Activated CD4-positive, alpha-beta T cell treated with anti-CD3 and anti-CD28 coated beads, Interleukin-2, amount 10 ng/mL, durations not matched to agents 24 days and 14 days (primary cell): ENCODE measurements at regions of chr14 and their contacts with region 1.

Region 1: GRCh38 chr14:59600211-59600945 is 23.8 kb upstream of the CCDC175 start:
- DNase-seq: no peak
- H3K4me3 Mint-ChIP-seq: no peak overlapping the region
- H3K27ac Mint-ChIP-seq: no peak overlapping the region
- H3K4me1 Mint-ChIP-seq: no peaks in the 10 kb centered on the region
- H3K27me3 Mint-ChIP-seq: peaks cover 14% of the 10 kb centered on the region

Region 2: GRCh38 chr14:58969951-58970751 is 630.2 kb before region 1 on chr14:
- intact Hi-C with region 1: loop called (anchors 10 kb)
- DNase-seq: no peak
- H3K4me3 Mint-ChIP-seq: no peak overlapping the region
- H3K27ac Mint-ChIP-seq: no peak overlapping the region
- H3K4me1 Mint-ChIP-seq: no peaks in the 10 kb centered on the region
- H3K27me3 Mint-ChIP-seq: no peaks in the 10 kb centered on the region